GM12878 (cell line): ENCODE measurements at regions of chr4 and their contacts with region 1.

Region 1: DNA sequence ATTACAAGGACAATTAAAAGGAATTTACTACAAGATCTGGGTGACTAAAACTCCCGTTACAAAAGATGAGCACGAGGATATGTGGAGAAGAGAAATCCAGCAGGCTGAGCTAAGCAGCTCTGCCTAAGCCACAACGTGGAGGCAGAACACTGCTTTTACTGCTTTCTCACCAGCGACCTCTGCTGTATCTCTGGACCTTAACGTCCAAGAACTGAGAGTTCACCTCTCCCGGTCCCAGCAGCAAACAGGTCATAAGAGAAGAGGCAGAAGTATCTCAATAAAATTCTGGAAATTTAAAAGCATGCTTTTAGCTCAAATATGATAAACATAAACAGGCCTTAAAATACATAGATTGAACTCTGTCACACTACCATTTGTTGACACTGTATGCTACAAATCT is 81.0 kb downstream of the ADGRA3 start:
- DNase-seq: no peak
- ATAC-seq: peak; percentile 91
- H3K4me3 ChIP-seq: no peak overlapping the region
- H3K27ac ChIP-seq: no peak overlapping the region
- H3K4me1 ChIP-seq: no peaks in the 10 kb centered on the region
- H3K27me3 ChIP-seq: no peaks in the 10 kb centered on the region
- CTCF ChIP-seq: peak; percentile 14 to 56 (median 44); a peak in 3 of 6 replicates
- EP300 ChIP-seq: no peak
- POLR2A ChIP-seq: no peak
- RAD21 ChIP-seq: peak; percentile 13; the same call in 1 of the 2 replicates

Region 2: GRCh38 chr4:22220965-22221364 is 213.9 kb before region 1 on chr4:
- CTCF ChIA-PET with region 1: no interaction called
- POLR2A ChIA-PET with region 1: no interaction called
- RAD21 ChIA-PET with region 1: no interaction called
- SMC1A ChIA-PET with region 1: no interaction called
- in situ Hi-C with region 1: no loop called
- intact Hi-C with region 1: no loop called
- DNase-seq: no peak
- ATAC-seq: no peak
- H3K4me3 ChIP-seq: no peak overlapping the region
- H3K27ac ChIP-seq: no peak overlapping the region
- H3K4me1 ChIP-seq: no peaks in the 10 kb centered on the region
- H3K27me3 ChIP-seq: no peaks in the 10 kb centered on the region
- CTCF ChIP-seq: no peak
- EP300 ChIP-seq: no peak
- POLR2A ChIP-seq: no peak
- RAD21 ChIP-seq: no peak

Region 3: GRCh38 chr4:22323691-22324090 is 111.2 kb before region 1 on chr4:
- CTCF ChIA-PET with region 1: no interaction called
- POLR2A ChIA-PET with region 1: no interaction called
- RAD21 ChIA-PET with region 1: no interaction called
- SMC1A ChIA-PET with region 1: no interaction called
- in situ Hi-C with region 1: no loop called
- intact Hi-C with region 1: no loop called
- DNase-seq: no peak
- ATAC-seq: no peak
- H3K4me3 ChIP-seq: no peak overlapping the region
- H3K27ac ChIP-seq: no peak overlapping the region
- H3K4me1 ChIP-seq: no peaks in the 10 kb centered on the region
- H3K27me3 ChIP-seq: no peaks in the 10 kb centered on the region
- CTCF ChIP-seq: no peak
- EP300 ChIP-seq: no peak
- POLR2A ChIP-seq: no peak
- RAD21 ChIP-seq: no peak

Region 4: DNA sequence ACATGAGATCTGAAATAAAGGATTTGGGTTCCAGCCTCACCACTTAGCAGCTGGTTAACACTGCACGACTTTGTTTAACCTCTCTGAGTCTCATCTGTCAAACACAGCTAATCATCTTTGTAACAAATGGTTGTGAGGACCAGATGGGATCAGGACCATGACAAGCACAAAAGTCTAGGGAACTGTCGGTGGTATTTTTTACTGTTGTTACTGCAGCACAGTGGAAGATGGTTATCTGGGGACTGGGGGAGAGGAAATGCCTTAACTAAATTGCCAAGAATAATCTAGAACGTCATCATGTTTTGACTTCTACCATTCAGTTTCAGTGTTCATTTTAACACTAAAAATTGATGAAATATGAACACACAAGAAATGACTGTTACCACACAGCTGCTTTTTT is 18.5 kb before region 1 on chr4:
- CTCF ChIA-PET with region 1: interaction called, 14 read pairs
- POLR2A ChIA-PET with region 1: interaction called, 3 read pairs
- RAD21 ChIA-PET with region 1: interaction called, 11 read pairs
- SMC1A ChIA-PET with region 1: interaction called, 9 read pairs
- in situ Hi-C with region 1: no loop called
- intact Hi-C with region 1: no loop called
- DNase-seq: no peak
- ATAC-seq: no peak; the same call in 2 of the 3 replicates
- H3K4me3 ChIP-seq: no peak overlapping the region
- H3K27ac ChIP-seq: no peak overlapping the region
- H3K4me1 ChIP-seq: no peaks in the 10 kb centered on the region
- H3K27me3 ChIP-seq: no peaks in the 10 kb centered on the region
- CTCF ChIP-seq: no peak
- EP300 ChIP-seq: no peak
- POLR2A ChIP-seq: no peak
- RAD21 ChIP-seq: no peak